IMR-90 (cell line): ENCODE measurements at regions of chr10 and their contacts with region 1.

Region 1: DNA sequence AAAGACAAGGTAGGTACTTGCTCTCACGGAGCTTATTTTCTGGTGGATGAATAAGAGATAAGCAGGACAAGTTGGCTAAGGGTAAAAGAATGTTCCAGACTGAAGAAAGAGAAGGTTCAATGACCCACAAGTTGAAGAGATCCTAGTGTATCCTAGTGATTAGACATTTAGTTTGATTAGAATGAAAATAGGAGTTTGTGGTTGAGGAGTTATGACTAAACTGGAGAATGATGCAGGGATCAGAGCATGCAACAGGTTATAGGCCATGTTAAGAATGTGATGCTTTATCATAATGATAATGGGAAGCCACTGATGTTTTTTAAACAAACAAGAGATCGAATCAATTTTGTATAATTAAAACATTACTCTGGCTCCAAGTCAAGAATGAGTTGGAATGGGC is 357.2 kb downstream of the HPSE2 start:
- DNase-seq: peak; percentile 41
- ATAC-seq: peak; percentile 74
- H3K4me3 ChIP-seq: no peak overlapping the region
- H3K27ac ChIP-seq: no peak overlapping the region
- H3K4me1 ChIP-seq: peaks cover 2% of the 10 kb centered on the region; the same call in 1 of the 2 replicates
- H3K27me3 ChIP-seq: no peaks in the 10 kb centered on the region
- CTCF ChIP-seq: no peak
- POLR2A ChIP-seq: no peak
- RAD21 ChIP-seq: no peak

Region 2: GRCh38 chr10:98848361-98848760 is 30.1 kb before region 1 on chr10:
- CTCF ChIA-PET with region 1: no interaction called
- POLR2A ChIA-PET with region 1: no interaction called
- dilution Hi-C with region 1: no loop called
- in situ Hi-C with region 1: no loop called
- intact Hi-C with region 1: no loop called
- DNase-seq: no peak
- ATAC-seq: no peak
- H3K4me3 ChIP-seq: no peak overlapping the region
- H3K27ac ChIP-seq: no peak overlapping the region
- H3K4me1 ChIP-seq: no peaks in the 10 kb centered on the region
- H3K27me3 ChIP-seq: no peaks in the 10 kb centered on the region
- CTCF ChIP-seq: no peak
- POLR2A ChIP-seq: no peak
- RAD21 ChIP-seq: no peak

Region 3: GRCh38 chr10:98956576-98957260 is 78.3 kb after region 1 on chr10:
- CTCF ChIA-PET with region 1: no interaction called
- POLR2A ChIA-PET with region 1: no interaction called
- dilution Hi-C with region 1: no loop called
- in situ Hi-C with region 1: no loop called
- intact Hi-C with region 1: loop called (anchors 5 kb)
- DNase-seq: peak; percentile 73
- ATAC-seq: peak; percentile 59
- H3K4me3 ChIP-seq: no peak overlapping the region
- H3K27ac ChIP-seq: peak overlapping the region; percentile 74
- H3K4me1 ChIP-seq: peaks cover 17% of the 10 kb centered on the region
- H3K27me3 ChIP-seq: no peaks in the 10 kb centered on the region
- CTCF ChIP-seq: no peak
- POLR2A ChIP-seq: no peak
- RAD21 ChIP-seq: no peak